Heart right ventricle (tissue), 16 donors: ENCODE measurements at regions of chr1 and their contacts with region 1.

Region 1: GRCh38 chr1:56831871-56832693 is 12.9 kb upstream of the FYB2 start:
- DNase-seq: peak; percentile 44 to 60
- ATAC-seq: peak; percentile 48 to 87 (median 76)
- H3K4me3 ChIP-seq: peak overlapping the region in 2 of 10 donors; percentile 11 to 21
- H3K27ac ChIP-seq: no peak overlapping the region
- H3K4me1 ChIP-seq: peaks cover 0 to 5% (median 0%) of the 10 kb centered on the region in 9 donors
- H3K27me3 ChIP-seq: peaks cover 0 to 14% (median 0%) of the 10 kb centered on the region in 7 donors
- CTCF ChIP-seq: peak; percentile 90 to 99 (median 96)

Region 2: GRCh38 chr1:56284928-56285327 is 547.2 kb before region 1 on chr1:
- intact Hi-C with region 1: no loop called
- DNase-seq: peak in 1 of 2 donors; percentile 23
- ATAC-seq: peak in 7 of 8 donors; percentile 64 to 86 (median 79)
- H3K4me3 ChIP-seq: no peak overlapping the region
- H3K27ac ChIP-seq: peak overlapping the region in 7 of 10 donors; percentile 5 to 73 (median 51)
- H3K4me1 ChIP-seq: peaks cover 0 to 35% (median 18%) of the 10 kb centered on the region in 9 donors
- H3K27me3 ChIP-seq: no peaks in the 10 kb centered on the region
- CTCF ChIP-seq: no peak

Region 3: DNA sequence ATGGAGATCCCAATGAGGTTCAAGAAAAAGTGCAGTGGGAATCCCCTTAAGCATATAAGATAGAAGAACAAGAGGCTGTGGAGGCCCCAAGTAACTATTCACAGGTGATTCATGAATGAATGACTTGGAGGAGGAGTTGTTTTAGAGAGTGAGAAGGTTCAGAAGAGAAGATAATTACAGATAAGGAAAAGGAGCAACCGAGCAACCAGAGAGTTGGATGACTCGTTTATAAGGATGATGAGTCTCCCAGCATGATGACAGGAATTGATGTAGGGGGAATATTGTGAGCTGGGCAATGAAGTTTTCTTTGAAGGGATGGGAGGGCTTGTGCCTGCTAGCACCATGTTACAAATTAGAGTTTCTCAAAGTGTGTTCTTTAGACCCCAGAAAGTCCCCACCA is 32.3 kb after region 1 on chr1:
- intact Hi-C with region 1: no loop called
- DNase-seq: no peak
- ATAC-seq: no peak
- H3K4me3 ChIP-seq: no peak overlapping the region
- H3K27ac ChIP-seq: no peak overlapping the region
- H3K4me1 ChIP-seq: no peaks in the 10 kb centered on the region
- H3K27me3 ChIP-seq: peaks cover 0 to 7% (median 0%) of the 10 kb centered on the region in 7 donors
- CTCF ChIP-seq: no peak

Region 4: GRCh38 chr1:57061369-57061768 is 229.3 kb after region 1 on chr1:
- intact Hi-C with region 1: loop called in 1 of 10 experiments (anchors 10 kb)
- DNase-seq: peak in 1 of 2 donors; percentile 19
- ATAC-seq: peak in 6 of 8 donors; percentile 57 to 81 (median 66)
- H3K4me3 ChIP-seq: no peak overlapping the region
- H3K27ac ChIP-seq: no peak overlapping the region
- H3K4me1 ChIP-seq: peaks cover 0 to 14% (median 0%) of the 10 kb centered on the region in 9 donors
- H3K27me3 ChIP-seq: no peaks in the 10 kb centered on the region
- CTCF ChIP-seq: peak in 2 of 9 donors; percentile 31 to 32

Region 5: DNA sequence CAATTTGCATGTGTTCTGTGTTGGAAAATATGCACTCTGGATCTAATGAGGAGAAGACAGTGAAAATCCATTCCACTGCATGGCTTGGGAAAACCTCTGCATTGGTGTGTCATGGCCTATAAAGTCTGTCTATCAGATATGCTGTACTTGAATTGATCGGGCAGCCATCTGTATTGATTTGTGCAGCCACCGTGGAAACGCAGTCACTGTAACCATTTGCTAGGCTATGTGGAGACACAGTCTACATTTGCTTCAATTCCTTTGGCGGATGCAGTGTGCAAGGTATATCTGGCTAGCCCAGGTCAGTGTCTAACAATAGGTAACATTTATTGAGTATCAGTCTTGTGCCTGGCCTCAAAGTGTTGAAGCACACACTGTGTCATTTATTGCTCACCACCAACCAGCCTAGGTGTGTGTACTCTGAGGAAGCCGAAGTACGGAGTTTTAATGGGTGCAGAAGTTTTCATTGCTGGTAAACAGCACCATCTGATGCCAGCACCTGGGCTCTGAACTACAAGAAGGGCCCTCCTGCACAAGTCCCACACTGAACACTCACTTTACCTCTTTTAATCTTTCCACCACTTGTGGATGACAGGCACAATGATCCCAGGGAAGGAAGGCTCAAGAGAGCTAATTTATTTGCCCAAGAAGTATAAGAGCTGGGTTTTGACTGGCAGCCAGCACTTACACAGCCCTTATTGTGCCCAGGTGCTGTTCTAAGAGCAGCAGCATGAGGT is 508.4 kb after region 1 on chr1:
- intact Hi-C with region 1: loop called in 8 of 10 experiments (anchors 5 to 10 kb)
- DNase-seq: no peak
- ATAC-seq: peak in 2 of 8 donors; percentile 44 to 57
- H3K4me3 ChIP-seq: no peak overlapping the region
- H3K27ac ChIP-seq: no peak overlapping the region
- H3K4me1 ChIP-seq: peaks cover 0 to 4% (median 0%) of the 10 kb centered on the region in 9 donors
- H3K27me3 ChIP-seq: no peaks in the 10 kb centered on the region
- CTCF ChIP-seq: peak in 5 of 9 donors; percentile 22 to 38 (median 32)

Region 6: GRCh38 chr1:57424231-57425027 is 592.3 kb after region 1 on chr1:
- intact Hi-C with region 1: loop called in 1 of 10 experiments (anchors 10 kb)
- DNase-seq: peak; percentile 27 to 53
- ATAC-seq: peak in 7 of 8 donors; percentile 69 to 80 (median 72)
- H3K4me3 ChIP-seq: peak overlapping the region; percentile 37 to 64 (median 53)
- H3K27ac ChIP-seq: peak overlapping the region in 6 of 10 donors; percentile 25 to 77 (median 52)
- H3K4me1 ChIP-seq: peaks cover 0 to 23% (median 10%) of the 10 kb centered on the region in 9 donors
- H3K27me3 ChIP-seq: peaks cover 0 to 68% (median 54%) of the 10 kb centered on the region in 7 donors
- CTCF ChIP-seq: peak; percentile 24 to 78 (median 66)

Region 7: GRCh38 chr1:58155418-58156123 is 1323.5 kb after region 1 on chr1:
- intact Hi-C with region 1: loop called in 6 of 10 experiments (anchors 5 to 10 kb)
- DNase-seq: peak; percentile 11 to 44
- ATAC-seq: peak; percentile 67 to 98 (median 93)
- H3K4me3 ChIP-seq: no peak overlapping the region
- H3K27ac ChIP-seq: peak overlapping the region in 4 of 10 donors; percentile 20 to 49 (median 32)
- H3K4me1 ChIP-seq: peaks cover 0 to 23% (median 0%) of the 10 kb centered on the region in 9 donors
- H3K27me3 ChIP-seq: no peaks in the 10 kb centered on the region
- CTCF ChIP-seq: peak; percentile 23 to 68 (median 58)

Region 8: DNA sequence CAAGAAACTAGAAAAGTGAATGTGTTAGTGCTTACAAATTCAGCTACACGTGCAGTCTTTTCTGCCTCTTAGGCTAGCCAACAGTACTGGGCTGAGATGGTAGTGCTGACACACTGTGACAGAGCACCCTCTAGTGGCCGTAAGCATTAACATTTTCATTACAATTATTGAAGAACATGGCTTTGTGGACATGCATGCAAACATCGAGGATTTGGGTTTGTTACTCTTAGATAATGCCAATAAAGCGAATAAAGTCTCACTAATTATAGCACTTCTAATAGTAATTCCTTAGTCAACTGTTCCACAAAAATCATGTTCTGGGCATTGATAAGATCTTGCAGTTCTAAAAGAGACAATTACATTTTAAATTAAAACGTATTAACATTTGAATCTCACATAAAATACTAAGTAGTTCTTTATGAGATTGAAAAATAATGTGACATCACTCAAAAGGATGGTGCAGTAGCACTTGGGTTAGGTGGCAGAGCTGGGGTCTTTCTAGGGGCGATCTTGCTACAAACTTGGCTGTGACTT is 1820.6 kb after region 1 on chr1:
- intact Hi-C with region 1: loop called in 1 of 10 experiments (anchors 10 kb)
- DNase-seq: peak in 1 of 2 donors; percentile 61
- ATAC-seq: peak; percentile 77 to 92 (median 86)
- H3K4me3 ChIP-seq: no peak overlapping the region
- H3K27ac ChIP-seq: no peak overlapping the region
- H3K4me1 ChIP-seq: peaks cover 0 to 13% (median 0%) of the 10 kb centered on the region in 9 donors
- H3K27me3 ChIP-seq: no peaks in the 10 kb centered on the region
- CTCF ChIP-seq: peak; percentile 67 to 88 (median 82)